Dorsolateral prefrontal cortex (tissue), 120 donors: ENCODE measurements at regions of chr11 and their contacts with region 1.

Region 1: GRCh38 chr11:30917859-30918478 is 331.8 kb upstream of the MPPED2 start:
- DNase-seq: no peak
- H3K4me3 ChIP-seq: no peak overlapping the region
- H3K27ac ChIP-seq: no peak overlapping the region
- H3K27me3 ChIP-seq: peaks cover 0 to 6% (median 0%) of the 10 kb centered on the region in 45 donors
- CTCF ChIP-seq: peak; percentile 62 to 90 (median 80)

Region 2: GRCh38 chr11:29432719-29433325 is 1485.1 kb before region 1 on chr11:
- intact Hi-C with region 1: loop called (anchors 10 kb)
- DNase-seq: no peak
- H3K4me3 ChIP-seq: no peak overlapping the region
- H3K27ac ChIP-seq: no peak overlapping the region
- H3K27me3 ChIP-seq: peaks cover 0 to 7% (median 0%) of the 10 kb centered on the region in 45 donors
- CTCF ChIP-seq: peak; percentile 35 to 79 (median 65)

Region 3: GRCh38 chr11:30346068-30346688 is 571.8 kb before region 1 on chr11:
- intact Hi-C with region 1: loop called (anchors 5 kb)
- DNase-seq: no peak
- H3K4me3 ChIP-seq: no peak overlapping the region
- H3K27ac ChIP-seq: no peak overlapping the region
- H3K27me3 ChIP-seq: no peaks in the 10 kb centered on the region
- CTCF ChIP-seq: peak; percentile 56 to 86 (median 74)

Region 4: DNA sequence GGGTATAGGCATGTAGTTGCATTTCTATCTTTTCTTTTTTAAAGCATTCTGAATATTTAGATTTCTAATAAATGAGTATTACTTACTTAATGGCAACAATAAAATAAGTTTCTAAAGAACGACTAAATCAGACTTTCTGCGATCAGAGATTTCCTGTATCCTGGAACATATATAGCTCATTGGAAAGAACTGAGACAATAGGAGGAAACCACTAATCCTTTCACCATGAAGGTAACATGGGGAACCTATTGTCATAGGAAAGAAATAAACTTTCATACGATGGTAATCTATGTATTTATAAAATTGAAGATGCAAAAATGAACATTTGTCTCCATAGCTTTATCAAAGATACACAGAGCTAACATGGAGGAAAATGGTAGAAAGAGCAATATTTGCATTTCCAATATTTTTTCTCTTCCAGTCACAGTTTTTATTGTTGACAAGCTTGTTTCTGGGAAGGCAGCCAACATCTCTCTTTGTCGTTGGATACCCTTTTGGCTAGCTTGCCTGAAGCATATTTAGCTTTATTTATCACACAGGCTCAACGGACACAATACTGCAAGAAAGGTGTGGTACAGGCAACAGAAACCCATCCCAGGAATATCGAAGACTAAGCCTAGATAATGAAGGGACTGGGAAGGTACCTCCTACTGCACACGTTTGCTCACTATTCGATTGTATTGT is 38.5 kb before region 1 on chr11:
- intact Hi-C with region 1: no loop called
- DNase-seq: no peak
- H3K4me3 ChIP-seq: peak overlapping the region in 1 of 59 donors; percentile 1
- H3K27ac ChIP-seq: no peak overlapping the region
- H3K27me3 ChIP-seq: no peaks in the 10 kb centered on the region
- CTCF ChIP-seq: no peak